ENCODE measurements at regions of chr2 and their contacts with region 1.

Region 1: GRCh38 chr2:112645310-112646101 is at the start of gene SLC20A1:
- DNase-seq: peak; percentile 96 to 98 (median 98)
- H3K4me3 ChIP-seq: peak within 1 kb of the TSS; percentile 84 to 98 (median 90)
- H3K27ac ChIP-seq: peak within 1 kb of the TSS; percentile 57 to 89
- H3K4me1 ChIP-seq: peaks cover 13 to 79% (median 55%) of the 10 kb centered on the region in 4 experiments
- H3K27me3 ChIP-seq: no peaks in the 10 kb centered on the region

Region 2: GRCh38 chr2:112658820-112659667 is 13.5 kb after region 1 on chr2:
- CTCF ChIA-PET with region 1: interaction called, 16 read pairs
- POLR2A ChIA-PET with region 1: interaction called, 6 read pairs
- DNase-seq: peak in 1 of 3 donors; percentile 13
- H3K4me3 ChIP-seq: no peak overlapping the region
- H3K27ac ChIP-seq: peak overlapping the region in 1 of 2 experiments; percentile 30
- H3K4me1 ChIP-seq: peaks cover 0 to 19% (median 15%) of the 10 kb centered on the region in 4 experiments
- H3K27me3 ChIP-seq: no peaks in the 10 kb centered on the region